Transverse colon (tissue), 4 donors: ENCODE measurements at regions of chr4 and their contacts with region 1.

Region 1: DNA sequence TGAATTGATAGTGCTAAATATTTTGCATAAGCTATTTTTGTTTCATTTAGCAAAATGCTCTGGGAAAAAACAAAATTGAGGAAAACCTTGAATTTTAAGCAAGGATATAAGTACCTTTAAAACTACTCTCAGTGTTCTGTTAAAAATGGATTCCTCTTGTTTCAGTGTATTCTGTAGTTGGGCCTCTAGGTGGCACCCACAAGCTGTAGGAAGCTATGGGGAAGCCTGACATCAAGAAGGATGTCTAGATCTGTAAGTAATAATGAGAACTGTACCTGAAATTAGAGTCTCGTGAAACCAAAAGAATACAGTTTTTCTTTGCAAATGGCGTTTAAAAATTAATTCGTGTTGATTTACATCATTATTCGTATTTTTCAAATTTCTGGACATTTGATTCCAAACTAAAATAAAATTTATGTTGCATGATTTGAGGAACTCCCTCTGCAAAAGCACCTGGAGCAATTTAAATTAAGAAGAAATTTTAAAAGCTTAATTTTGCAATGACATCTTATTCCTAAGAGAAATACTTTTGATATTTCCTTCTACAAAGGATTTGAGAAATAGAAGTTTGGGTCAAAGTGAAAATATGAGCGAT is 51.2 kb downstream of the TMPRSS11E start:
- DNase-seq: peak; percentile 73
- H3K4me3 ChIP-seq: no peak overlapping the region
- H3K27ac ChIP-seq: no peak overlapping the region
- H3K4me1 ChIP-seq: peaks cover 0 to 11% (median 0%) of the 10 kb centered on the region in 4 donors
- H3K27me3 ChIP-seq: no peaks in the 10 kb centered on the region
- CTCF ChIP-seq: peak; percentile 71 to 88 (median 78)
- EP300 ChIP-seq: no peak
- POLR2A ChIP-seq: no peak

Region 2: DNA sequence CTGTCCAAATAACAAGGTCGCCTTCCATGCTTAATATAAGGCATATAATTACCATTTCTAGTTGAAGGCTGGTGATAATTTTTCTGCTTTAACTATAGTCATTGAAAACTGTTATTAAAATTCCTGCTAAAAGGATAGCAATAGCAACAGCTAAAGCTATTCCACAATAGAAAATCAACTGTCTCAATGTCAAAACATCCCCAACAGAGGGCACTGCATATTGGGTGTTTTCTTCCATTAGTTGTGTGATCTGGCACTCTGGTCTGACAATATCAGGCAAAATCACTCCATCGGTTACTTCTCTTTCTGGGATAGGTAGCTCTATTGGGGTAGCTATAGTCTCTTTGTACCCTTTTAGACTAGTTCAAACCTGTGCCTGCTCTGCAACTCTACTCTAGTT is 422.3 kb before region 1 on chr4:
- in situ Hi-C with region 1: no loop called
- intact Hi-C with region 1: no loop called
- DNase-seq: no peak
- H3K4me3 ChIP-seq: no peak overlapping the region
- H3K27ac ChIP-seq: no peak overlapping the region
- H3K4me1 ChIP-seq: no peaks in the 10 kb centered on the region
- H3K27me3 ChIP-seq: no peaks in the 10 kb centered on the region
- CTCF ChIP-seq: no peak
- EP300 ChIP-seq: no peak
- POLR2A ChIP-seq: no peak

Region 3: DNA sequence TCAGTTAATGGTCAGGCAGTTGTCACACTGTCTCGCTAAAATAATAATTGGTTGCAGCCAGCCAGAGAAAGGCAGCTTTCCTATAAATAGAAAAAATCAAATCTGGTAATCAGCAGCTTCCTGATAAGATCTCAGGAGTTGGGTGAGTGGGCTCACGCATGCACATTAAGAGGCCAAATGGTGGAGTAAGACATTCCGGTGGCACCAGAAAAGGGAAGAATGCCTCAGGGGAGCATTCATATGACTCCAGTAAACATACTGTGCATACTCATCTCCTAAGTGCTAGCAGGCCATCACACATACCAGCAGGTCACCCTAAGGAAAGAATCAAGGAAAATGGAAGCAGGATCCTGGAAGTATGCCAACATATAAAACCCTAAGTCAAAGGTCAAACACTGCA is 131.9 kb after region 1 on chr4:
- in situ Hi-C with region 1: loop called in 2 of 4 experiments (anchors 10 to 25 kb)
- intact Hi-C with region 1: no loop called
- DNase-seq: no peak
- H3K4me3 ChIP-seq: no peak overlapping the region
- H3K27ac ChIP-seq: no peak overlapping the region
- H3K4me1 ChIP-seq: no peaks in the 10 kb centered on the region
- H3K27me3 ChIP-seq: no peaks in the 10 kb centered on the region
- CTCF ChIP-seq: no peak
- EP300 ChIP-seq: no peak
- POLR2A ChIP-seq: no peak

Region 4: DNA sequence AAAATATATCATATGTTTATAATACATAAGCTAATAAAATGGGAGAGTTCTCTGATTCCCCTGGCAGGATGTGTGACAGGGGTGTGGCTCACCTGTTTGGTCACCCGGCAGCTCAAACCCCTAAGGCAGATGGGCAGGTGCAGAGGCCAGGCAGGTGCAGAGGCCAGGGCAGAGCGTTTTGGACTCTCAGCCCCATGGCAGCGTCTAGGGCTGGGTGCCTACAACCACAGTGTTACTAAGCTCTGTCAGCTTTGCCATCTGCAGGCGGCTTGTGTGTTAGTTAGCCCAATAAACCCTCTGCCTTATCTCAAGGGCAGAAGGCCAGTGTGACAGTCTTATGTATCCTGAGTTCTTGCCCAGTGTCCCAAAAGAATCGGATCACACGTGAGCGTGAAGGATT is 225.9 kb after region 1 on chr4:
- in situ Hi-C with region 1: no loop called
- intact Hi-C with region 1: no loop called
- DNase-seq: peak; percentile 36
- H3K4me3 ChIP-seq: no peak overlapping the region
- H3K27ac ChIP-seq: peak overlapping the region in 2 of 4 donors; percentile 2 to 37
- H3K4me1 ChIP-seq: peaks cover 0 to 3% (median 0%) of the 10 kb centered on the region in 4 donors
- H3K27me3 ChIP-seq: no peaks in the 10 kb centered on the region
- CTCF ChIP-seq: no peak
- EP300 ChIP-seq: no peak
- POLR2A ChIP-seq: no peak

Region 5: GRCh38 chr4:69156913-69157312 is 658.4 kb after region 1 on chr4:
- in situ Hi-C with region 1: loop called in 3 of 4 experiments (anchors 25 kb)
- intact Hi-C with region 1: no loop called
- DNase-seq: no peak
- H3K4me3 ChIP-seq: no peak overlapping the region
- H3K27ac ChIP-seq: no peak overlapping the region
- H3K4me1 ChIP-seq: no peaks in the 10 kb centered on the region
- H3K27me3 ChIP-seq: no peaks in the 10 kb centered on the region
- CTCF ChIP-seq: peak in 2 of 5 experiments; percentile 17 to 24
- EP300 ChIP-seq: no peak
- POLR2A ChIP-seq: no peak

Region 6: GRCh38 chr4:69167300-69167699 is 668.8 kb after region 1 on chr4:
- in situ Hi-C with region 1: loop called in 3 of 4 experiments (anchors 25 kb)
- intact Hi-C with region 1: loop called (anchors 10 kb)
- DNase-seq: no peak
- H3K4me3 ChIP-seq: no peak overlapping the region
- H3K27ac ChIP-seq: no peak overlapping the region
- H3K4me1 ChIP-seq: peaks cover 0 to 12% (median 0%) of the 10 kb centered on the region in 4 donors
- H3K27me3 ChIP-seq: no peaks in the 10 kb centered on the region
- CTCF ChIP-seq: no peak
- EP300 ChIP-seq: no peak
- POLR2A ChIP-seq: no peak